PC-3 (cell line): ENCODE measurements at regions of chr6 and their contacts with region 1.

Region 1: DNA sequence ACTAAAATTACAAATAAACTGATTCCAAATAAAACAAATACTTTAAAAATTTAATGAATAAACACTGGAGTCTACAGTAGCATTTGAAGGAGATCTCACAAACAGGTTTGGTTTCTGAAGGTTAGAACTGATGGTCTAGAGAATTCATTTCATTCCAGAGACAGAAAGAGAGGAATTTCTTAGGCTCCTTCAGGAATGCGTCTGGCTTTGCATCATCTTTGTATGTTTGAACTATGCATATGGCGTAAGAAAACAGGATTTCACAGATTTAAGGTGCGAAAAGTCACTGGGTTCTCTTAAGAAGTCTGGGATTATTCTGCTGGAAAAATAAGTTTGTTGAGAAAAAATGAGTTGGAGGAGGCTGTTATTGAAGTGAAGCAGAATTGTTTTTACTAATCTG is 139.9 kb upstream of the DUSP22 start:
- DNase-seq: no peak
- ATAC-seq: no peak
- H3K4me3 ChIP-seq: no peak overlapping the region
- H3K27ac ChIP-seq: no peak overlapping the region
- H3K4me1 ChIP-seq: peaks cover 28% of the 10 kb centered on the region
- H3K27me3 ChIP-seq: no peaks in the 10 kb centered on the region
- CTCF ChIP-seq: no peak

Region 2: GRCh38 chr6:168865-169455 is 16.5 kb after region 1 on chr6:
- CTCF ChIA-PET with region 1: no interaction called
- POLR2A ChIA-PET with region 1: no interaction called
- intact Hi-C with region 1: loop called (anchors 1 kb)
- DNase-seq: peak; percentile 81
- ATAC-seq: peak; percentile 60; the same call in 1 of the 2 replicates
- H3K4me3 ChIP-seq: no peak overlapping the region
- H3K27ac ChIP-seq: no peak overlapping the region
- H3K4me1 ChIP-seq: peaks cover 14% of the 10 kb centered on the region
- H3K27me3 ChIP-seq: peaks cover 6% of the 10 kb centered on the region; the same call in 1 of the 2 replicates
- CTCF ChIP-seq: peak; percentile 80